Sigmoid colon (tissue), 7 donors: ENCODE measurements at regions of chr11 and their contacts with region 1.

Region 1: GRCh38 chr11:118610804-118611795 is 3.7 kb downstream of the PHLDB1 start:
- DNase-seq: peak; percentile 92
- H3K4me3 ChIP-seq: peak overlapping the region; percentile 34 to 80 (median 73)
- H3K27ac ChIP-seq: peak overlapping the region; percentile 90 to 97 (median 93)
- H3K4me1 ChIP-seq: peaks cover 0 to 53% (median 36%) of the 10 kb centered on the region in 4 donors
- H3K27me3 ChIP-seq: no peaks in the 10 kb centered on the region
- CTCF ChIP-seq: peak; percentile 50 to 87 (median 60)
- EP300 ChIP-seq: no peak
- POLR2A ChIP-seq: no peak

Region 2: GRCh38 chr11:118634431-118635236 is 23.5 kb after region 1 on chr11:
- intact Hi-C with region 1: loop called (anchors 1 kb)
- DNase-seq: peak; percentile 94
- H3K4me3 ChIP-seq: peak overlapping the region; percentile 18 to 48 (median 39)
- H3K27ac ChIP-seq: peak overlapping the region; percentile 80 to 86 (median 82)
- H3K4me1 ChIP-seq: peaks cover 0 to 55% (median 43%) of the 10 kb centered on the region in 4 donors
- H3K27me3 ChIP-seq: no peaks in the 10 kb centered on the region
- CTCF ChIP-seq: peak in 2 of 4 experiments; percentile 9 to 22
- EP300 ChIP-seq: no peak
- POLR2A ChIP-seq: no peak

Region 3: DNA sequence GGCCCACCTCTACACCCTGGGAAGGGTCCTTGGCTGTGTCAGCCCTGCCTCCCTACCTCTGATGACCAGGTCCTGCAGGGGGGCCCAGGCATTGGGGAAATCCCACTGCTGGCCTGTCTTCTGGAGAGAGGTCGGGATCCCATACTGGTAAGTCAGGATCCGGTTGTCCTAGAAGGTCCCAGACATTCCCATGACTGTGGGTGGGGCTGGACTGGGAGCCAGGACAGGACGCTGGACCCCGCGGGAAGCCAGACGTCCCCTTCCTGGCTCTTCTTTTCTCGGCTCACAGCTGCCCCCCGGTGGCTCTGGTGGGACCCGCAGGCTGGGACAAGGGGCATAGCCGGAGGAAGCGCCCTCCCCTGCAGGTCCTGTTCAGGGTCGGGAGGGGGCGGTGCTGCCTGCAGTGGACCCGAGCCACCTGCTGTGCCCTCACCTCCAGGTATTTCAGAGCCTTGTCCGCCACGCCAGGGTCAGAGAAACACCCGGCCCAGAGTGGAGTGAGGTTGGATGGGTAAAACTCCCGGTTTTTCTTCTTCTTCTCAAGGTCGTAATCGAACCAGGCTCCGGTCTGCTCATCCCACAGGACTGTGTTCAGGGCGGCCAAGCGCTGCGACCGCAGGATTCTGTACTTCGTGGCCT is 48.3 kb after region 1 on chr11:
- intact Hi-C with region 1: loop called (anchors 2 kb)
- DNase-seq: peak; percentile 96
- H3K4me3 ChIP-seq: peak overlapping the region in 1 of 4 donors; percentile 3
- H3K27ac ChIP-seq: peak overlapping the region; percentile 30 to 64 (median 54)
- H3K4me1 ChIP-seq: peaks cover 0 to 18% (median 12%) of the 10 kb centered on the region in 4 donors
- H3K27me3 ChIP-seq: no peaks in the 10 kb centered on the region
- CTCF ChIP-seq: peak; percentile 87 to 99 (median 93)
- EP300 ChIP-seq: no peak
- POLR2A ChIP-seq: no peak

Region 4: DNA sequence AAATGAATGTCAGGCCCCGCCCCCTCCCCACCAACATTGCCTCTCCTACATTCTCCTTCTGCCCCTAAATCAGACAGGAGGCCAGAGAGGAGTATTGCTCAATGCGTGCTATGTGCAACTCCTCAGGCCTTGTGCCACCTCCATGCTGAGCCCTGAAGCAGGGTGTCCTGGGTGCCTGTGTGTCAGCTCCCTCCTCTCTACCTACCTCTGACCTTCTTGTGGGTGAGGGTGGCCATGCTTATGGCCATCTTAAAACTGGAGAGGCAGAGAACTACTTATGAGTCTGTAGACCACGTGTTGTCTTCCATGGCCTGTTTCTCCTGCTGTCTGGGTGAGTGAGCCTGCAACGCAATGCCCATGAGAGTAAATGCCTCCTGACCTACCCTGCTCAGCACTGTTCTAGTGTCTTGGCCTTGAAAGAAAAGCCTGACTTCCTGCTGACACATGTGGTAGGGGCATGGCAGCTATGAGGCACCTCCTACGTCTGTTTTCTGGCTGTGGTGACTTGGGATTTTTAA is 695.3 kb after region 1 on chr11:
- intact Hi-C with region 1: no loop called
- DNase-seq: no peak
- H3K4me3 ChIP-seq: no peak overlapping the region
- H3K27ac ChIP-seq: peak overlapping the region; percentile 50 to 99 (median 78)
- H3K4me1 ChIP-seq: peaks cover 0 to 23% (median 12%) of the 10 kb centered on the region in 4 donors
- H3K27me3 ChIP-seq: no peaks in the 10 kb centered on the region
- CTCF ChIP-seq: no peak
- EP300 ChIP-seq: peak in 1 of 4 donors; percentile 55
- POLR2A ChIP-seq: no peak

Region 5: GRCh38 chr11:119533921-119534736 is 923.0 kb after region 1 on chr11:
- intact Hi-C with region 1: no loop called
- DNase-seq: peak; percentile 83
- H3K4me3 ChIP-seq: no peak overlapping the region
- H3K27ac ChIP-seq: no peak overlapping the region
- H3K4me1 ChIP-seq: no peaks in the 10 kb centered on the region
- H3K27me3 ChIP-seq: peaks cover 0 to 3% (median 0%) of the 10 kb centered on the region in 3 donors
- CTCF ChIP-seq: peak in 3 of 4 experiments; percentile 62 to 72 (median 66)
- EP300 ChIP-seq: no peak
- POLR2A ChIP-seq: no peak